Posterior vena cava (tissue), 2 donors: ENCODE measurements at regions of chr20 and their contacts with region 1.

Region 1: GRCh38 chr20:7637184-7637583 is 303.1 kb downstream of the HAO1 start:
- DNase-seq: no peak

Region 2: DNA sequence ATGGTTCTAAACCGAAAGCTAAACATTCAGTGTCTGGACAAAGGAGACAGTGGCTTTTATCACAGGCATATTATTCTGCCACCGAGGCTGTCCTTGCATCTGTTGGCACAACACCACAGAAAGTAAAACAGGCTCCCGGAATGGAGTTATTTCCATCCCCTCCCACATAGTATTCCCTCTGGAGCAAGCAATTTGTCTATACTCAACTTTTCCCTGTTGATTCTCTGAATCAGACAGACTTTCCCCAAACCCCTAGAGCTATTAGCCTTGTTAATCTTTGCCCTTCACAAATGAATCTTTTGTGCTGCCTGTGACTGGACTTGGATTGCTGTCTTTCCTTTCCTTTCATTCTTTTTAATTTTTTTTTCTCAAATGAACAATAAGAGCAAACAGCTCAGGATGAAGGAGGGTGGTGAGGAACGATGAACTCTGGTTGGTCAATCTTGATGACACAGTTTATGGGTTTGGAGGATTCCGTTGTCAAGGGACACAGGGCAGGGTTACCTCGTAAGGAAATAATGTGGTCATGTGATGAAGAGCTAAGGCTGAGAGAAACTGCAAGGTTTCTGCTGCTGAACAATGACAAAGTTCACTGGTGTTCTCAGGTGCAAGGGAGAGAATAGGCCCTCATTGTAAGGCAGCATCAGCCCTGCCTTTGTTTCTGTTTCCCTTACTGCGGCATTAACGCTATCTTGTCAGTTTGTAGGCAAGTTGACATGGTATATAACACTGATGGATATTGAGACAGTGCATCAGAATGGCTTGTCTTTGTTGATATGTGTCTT is 1144.7 kb before region 1 on chr20:
- intact Hi-C with region 1: loop called in 1 of 2 experiments (anchors 5 kb)
- DNase-seq: no peak

Region 3: DNA sequence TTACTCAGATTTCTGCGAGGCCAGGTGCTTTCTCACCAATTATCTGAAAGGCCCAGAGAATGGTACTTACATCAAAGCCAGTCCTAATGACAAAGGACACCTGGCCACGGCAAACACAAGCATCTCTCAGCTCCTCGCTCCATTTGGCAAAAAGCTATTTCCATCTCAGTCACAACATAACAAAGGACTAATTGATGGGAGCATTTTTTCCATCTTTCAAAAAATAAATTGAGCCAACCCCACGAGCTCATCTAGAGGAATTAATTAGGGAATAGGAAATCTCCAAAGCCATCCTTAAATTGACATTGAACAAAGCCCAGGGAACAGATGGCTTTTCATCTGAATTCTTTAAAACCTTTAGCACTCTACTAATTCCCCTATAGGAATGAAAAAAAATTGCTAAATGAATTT is 66.4 kb after region 1 on chr20:
- intact Hi-C with region 1: no loop called
- DNase-seq: no peak

Region 4: GRCh38 chr20:8127553-8128255 is 490.5 kb after region 1 on chr20:
- intact Hi-C with region 1: no loop called
- DNase-seq: no peak